IMR-90 (cell line): ENCODE measurements at regions of chr5 and their contacts with region 1.

Region 1: DNA sequence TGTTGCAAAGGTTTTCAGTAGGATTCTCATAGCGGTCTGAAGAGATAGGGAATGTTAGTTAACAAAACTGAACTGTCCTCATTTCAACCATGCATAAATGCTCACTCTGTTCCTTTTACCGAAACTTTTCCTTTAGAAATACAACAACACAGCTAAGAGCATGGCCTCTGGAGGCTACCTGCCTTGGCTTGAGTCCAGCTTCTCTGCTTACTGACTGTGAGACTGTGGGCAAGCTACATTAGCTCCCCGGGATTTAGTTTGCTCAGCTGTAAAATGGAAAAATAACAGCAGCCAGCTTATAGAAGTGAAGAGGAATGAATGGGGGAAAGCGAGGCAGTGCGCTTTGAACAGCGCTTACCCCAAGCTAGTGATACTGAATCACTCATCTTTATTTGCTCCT is 507.9 kb upstream of the DAP start:
- DNase-seq: no peak
- ATAC-seq: no peak
- H3K4me3 ChIP-seq: no peak overlapping the region
- H3K27ac ChIP-seq: no peak overlapping the region
- H3K4me1 ChIP-seq: no peaks in the 10 kb centered on the region
- H3K27me3 ChIP-seq: no peaks in the 10 kb centered on the region
- CTCF ChIP-seq: no peak
- POLR2A ChIP-seq: no peak
- RAD21 ChIP-seq: no peak

Region 2: GRCh38 chr5:10218658-10219057 is 1050.2 kb before region 1 on chr5:
- CTCF ChIA-PET with region 1: no interaction called
- POLR2A ChIA-PET with region 1: no interaction called
- dilution Hi-C with region 1: no loop called
- in situ Hi-C with region 1: no loop called
- intact Hi-C with region 1: loop called (anchors 5 kb)
- DNase-seq: no peak
- ATAC-seq: no peak
- H3K4me3 ChIP-seq: no peak overlapping the region
- H3K27ac ChIP-seq: no peak overlapping the region
- H3K4me1 ChIP-seq: peaks cover 7% of the 10 kb centered on the region
- H3K27me3 ChIP-seq: no peaks in the 10 kb centered on the region
- CTCF ChIP-seq: no peak
- POLR2A ChIP-seq: no peak
- RAD21 ChIP-seq: no peak

Region 3: GRCh38 chr5:10701567-10702039 is 567.3 kb before region 1 on chr5:
- CTCF ChIA-PET with region 1: no interaction called
- POLR2A ChIA-PET with region 1: no interaction called
- dilution Hi-C with region 1: no loop called
- in situ Hi-C with region 1: no loop called
- intact Hi-C with region 1: no loop called
- DNase-seq: peak; percentile 71
- ATAC-seq: peak; percentile 57
- H3K4me3 ChIP-seq: no peak overlapping the region
- H3K27ac ChIP-seq: peak overlapping the region; percentile 44
- H3K4me1 ChIP-seq: peaks cover 28% of the 10 kb centered on the region
- H3K27me3 ChIP-seq: no peaks in the 10 kb centered on the region
- CTCF ChIP-seq: peak; percentile 50
- POLR2A ChIP-seq: no peak
- RAD21 ChIP-seq: peak; percentile 64

Region 4: GRCh38 chr5:12023614-12024241 is 754.8 kb after region 1 on chr5:
- CTCF ChIA-PET with region 1: no interaction called
- POLR2A ChIA-PET with region 1: no interaction called
- dilution Hi-C with region 1: no loop called
- in situ Hi-C with region 1: no loop called
- intact Hi-C with region 1: loop called (anchors 5 kb)
- DNase-seq: peak; percentile 27
- ATAC-seq: 0 out of 2 replicates have a peak, but pooled peaks have one; percentile 35
- H3K4me3 ChIP-seq: no peak overlapping the region
- H3K27ac ChIP-seq: no peak overlapping the region
- H3K4me1 ChIP-seq: no peaks in the 10 kb centered on the region
- H3K27me3 ChIP-seq: no peaks in the 10 kb centered on the region
- CTCF ChIP-seq: peak; percentile 52
- POLR2A ChIP-seq: no peak
- RAD21 ChIP-seq: peak; percentile 45